PC-9 (cell line): ENCODE measurements at regions of chr11 and their contacts with region 1.

Region 1: DNA sequence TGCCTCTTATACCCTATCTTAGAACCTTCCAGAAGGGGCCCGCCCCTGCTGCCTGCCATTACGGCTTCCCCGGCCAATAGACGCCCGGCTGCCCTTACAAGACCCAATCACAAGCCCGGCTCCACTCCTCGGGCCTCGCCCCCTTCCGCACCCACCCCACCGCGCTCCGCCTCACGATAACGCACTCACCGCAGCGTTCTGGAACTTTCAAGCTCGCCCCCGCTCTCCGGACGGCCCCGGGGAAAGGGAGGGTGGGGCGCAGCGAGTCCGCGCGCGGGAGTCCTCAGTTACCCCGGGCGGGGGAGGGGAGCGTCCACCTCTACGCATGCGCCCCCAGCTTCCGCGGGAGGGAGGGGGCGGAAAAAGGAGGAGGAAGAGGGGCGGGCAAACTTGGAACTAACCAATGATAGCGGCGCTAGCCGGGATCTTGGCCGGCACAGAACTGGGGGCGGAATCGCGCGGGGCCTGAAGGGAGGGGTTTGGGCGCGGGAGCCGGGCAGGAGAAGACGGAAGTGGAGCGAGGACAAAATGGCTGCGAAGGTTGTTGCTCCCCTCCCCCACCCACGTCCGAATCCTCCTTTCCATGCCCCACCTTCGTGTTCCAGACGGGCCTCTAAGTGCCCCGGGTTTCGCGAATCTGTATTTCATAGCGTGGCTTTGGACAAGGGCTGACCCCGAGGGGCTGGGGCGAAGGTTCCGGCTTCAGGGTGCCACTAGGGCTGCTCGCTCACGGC is 389 bp upstream of the HSPA8 start:
- DNase-seq: peak; percentile 97 to 99
- H3K4me3 ChIP-seq: peak overlapping the region; percentile 97
- H3K27ac ChIP-seq: peak overlapping the region; percentile 96
- H3K4me1 ChIP-seq: peaks cover 53% of the 10 kb centered on the region
- H3K27me3 ChIP-seq: no peaks in the 10 kb centered on the region
- CTCF ChIP-seq: no peak

Region 2: DNA sequence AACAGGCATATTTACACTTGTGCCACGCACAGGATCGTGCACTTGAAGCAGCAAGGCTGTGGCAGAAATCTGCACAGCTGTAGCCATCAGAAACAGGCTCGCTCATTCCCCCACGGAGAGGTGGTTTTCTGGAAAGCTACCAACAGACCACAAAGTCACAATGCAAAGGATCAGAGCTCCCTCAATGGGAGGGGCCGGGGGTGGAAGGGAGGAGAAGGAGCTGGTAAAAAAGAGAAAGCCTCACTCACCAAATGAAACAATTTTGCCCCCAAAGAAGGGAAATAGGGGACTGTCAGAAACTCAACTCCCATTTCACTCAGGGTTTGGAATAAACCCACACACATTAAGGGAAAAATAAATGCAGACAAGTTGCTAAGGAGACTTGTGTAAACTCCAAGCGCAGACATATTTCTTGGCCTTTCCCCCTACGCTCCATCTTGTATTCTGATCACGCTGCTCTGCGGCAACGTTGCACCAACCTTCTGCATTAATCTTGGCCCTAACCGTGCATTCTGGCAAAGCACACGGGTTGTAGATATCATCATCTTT is 903.1 kb before region 1 on chr11:
- CTCF ChIA-PET with region 1: no interaction called
- POLR2A ChIA-PET with region 1: interaction called, 10 read pairs
- intact Hi-C with region 1: no loop called
- DNase-seq: no peak
- H3K4me3 ChIP-seq: no peak overlapping the region
- H3K27ac ChIP-seq: no peak overlapping the region
- H3K4me1 ChIP-seq: peaks cover 32% of the 10 kb centered on the region
- H3K27me3 ChIP-seq: no peaks in the 10 kb centered on the region
- CTCF ChIP-seq: no peak

Region 3: DNA sequence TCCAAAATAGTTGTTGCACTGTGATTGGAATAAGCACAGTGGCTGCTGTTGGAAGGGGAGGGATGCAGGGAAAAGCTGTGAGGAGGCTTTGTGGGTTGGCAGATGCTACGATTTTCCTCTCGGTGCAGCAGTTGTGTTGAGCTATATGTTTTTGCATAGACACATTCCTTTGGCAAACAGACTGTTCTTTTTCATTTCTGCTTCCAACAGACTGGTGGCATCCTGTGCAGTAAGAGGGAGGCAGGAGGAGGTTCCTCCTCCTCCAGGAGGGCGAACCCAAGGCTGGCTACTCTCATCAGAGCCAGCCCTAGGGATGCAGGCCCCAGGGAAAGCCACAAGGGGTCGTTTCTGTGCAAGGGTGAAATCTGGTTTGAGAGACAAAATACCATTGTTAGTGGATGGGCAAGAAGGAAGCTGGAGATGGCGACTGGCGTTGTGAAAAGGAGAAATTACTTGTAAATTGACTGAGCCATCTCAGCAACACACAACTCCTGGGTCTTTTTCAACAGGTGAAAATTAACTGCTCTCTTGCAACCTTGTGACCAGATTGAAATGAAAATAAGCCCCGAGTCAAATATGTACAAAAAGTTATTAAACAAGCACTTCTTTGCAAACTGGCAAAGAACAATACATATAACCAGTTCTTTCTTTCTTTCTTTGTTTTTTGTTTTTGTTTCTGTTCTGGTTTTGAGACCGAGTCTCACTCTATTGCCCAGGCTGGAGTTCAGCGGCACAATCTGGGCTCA is 433.3 kb before region 1 on chr11:
- CTCF ChIA-PET with region 1: no interaction called
- POLR2A ChIA-PET with region 1: no interaction called
- intact Hi-C with region 1: loop called (anchors 5 kb)
- DNase-seq: peak; percentile 53 to 65
- H3K4me3 ChIP-seq: no peak overlapping the region
- H3K27ac ChIP-seq: no peak overlapping the region
- H3K4me1 ChIP-seq: peaks cover 36% of the 10 kb centered on the region
- H3K27me3 ChIP-seq: no peaks in the 10 kb centered on the region
- CTCF ChIP-seq: peak; percentile 86

Region 4: DNA sequence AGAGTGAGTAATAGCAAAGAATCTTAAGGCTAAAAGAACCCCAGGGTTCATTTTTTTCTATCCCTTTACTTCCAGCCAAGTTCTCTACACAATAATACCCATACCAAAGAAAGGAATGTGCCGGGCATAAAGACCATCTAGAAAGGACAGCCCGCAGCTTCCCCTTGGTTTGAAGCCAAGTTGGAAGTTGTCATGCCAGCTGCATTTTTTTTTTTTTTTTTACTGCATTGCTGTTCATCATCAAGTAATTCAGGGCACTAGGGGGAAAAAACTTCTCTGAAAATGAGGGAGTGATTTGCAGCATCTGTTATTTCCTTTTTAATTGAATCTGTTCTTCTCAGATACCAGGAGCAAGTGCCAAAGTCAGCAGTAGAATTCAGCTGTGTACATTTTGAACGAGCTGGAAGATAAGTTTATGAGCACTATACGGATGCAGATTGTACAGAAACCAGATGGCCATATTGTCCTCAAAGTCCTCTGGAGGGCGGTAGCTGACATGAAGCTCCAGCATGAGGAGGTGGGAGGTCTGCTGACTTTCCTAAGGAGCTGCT is 350.4 kb before region 1 on chr11:
- CTCF ChIA-PET with region 1: no interaction called
- POLR2A ChIA-PET with region 1: no interaction called
- intact Hi-C with region 1: loop called (anchors 5 kb)
- DNase-seq: peak; percentile 49 to 72
- H3K4me3 ChIP-seq: no peak overlapping the region
- H3K27ac ChIP-seq: no peak overlapping the region; the same call in 1 of the 2 replicates
- H3K4me1 ChIP-seq: peaks cover 32% of the 10 kb centered on the region
- H3K27me3 ChIP-seq: no peaks in the 10 kb centered on the region
- CTCF ChIP-seq: no peak

Region 5: DNA sequence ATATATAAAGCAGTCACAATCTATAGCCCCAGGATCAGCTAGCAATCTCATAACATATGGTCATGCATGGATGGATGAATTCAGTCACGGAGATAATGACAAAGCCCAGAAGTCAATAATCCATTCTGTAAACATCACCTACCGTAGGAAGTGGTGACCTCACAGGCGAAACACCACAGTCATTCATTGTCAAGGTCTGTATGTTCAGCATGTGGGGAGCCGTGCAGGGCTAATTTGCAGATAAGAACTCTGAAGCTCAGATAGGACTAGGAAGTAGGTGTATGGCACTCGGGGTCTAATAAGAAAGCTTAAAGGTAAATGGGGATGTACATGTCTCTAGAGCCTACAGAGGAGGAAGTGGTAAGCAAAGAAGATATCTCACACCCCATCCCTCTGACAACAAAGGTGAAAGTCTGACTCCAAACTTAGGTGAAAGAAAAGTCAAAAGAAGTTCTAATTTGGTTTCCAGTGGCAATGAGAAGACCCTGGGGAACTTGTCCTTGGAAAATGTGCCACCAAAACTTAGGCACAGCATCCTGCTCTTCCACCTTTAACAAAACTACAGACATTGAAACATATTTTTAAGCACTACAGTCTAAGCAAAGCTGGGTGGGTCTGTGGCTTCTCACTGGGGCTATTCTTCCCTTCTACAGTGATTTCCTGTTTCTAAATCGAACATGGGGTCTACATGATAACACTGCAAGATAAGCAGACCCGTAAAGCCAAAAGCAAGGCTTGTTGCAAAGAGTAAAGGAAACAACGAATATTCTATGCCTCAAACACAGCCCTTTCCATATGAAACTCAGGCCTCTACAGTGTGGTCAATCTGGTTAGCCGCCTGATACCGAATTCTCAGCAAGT is 218.8 kb before region 1 on chr11:
- CTCF ChIA-PET with region 1: no interaction called
- POLR2A ChIA-PET with region 1: no interaction called
- intact Hi-C with region 1: no loop called
- DNase-seq: no peak
- H3K4me3 ChIP-seq: no peak overlapping the region
- H3K27ac ChIP-seq: no peak overlapping the region
- H3K4me1 ChIP-seq: no peaks in the 10 kb centered on the region
- H3K27me3 ChIP-seq: no peaks in the 10 kb centered on the region
- CTCF ChIP-seq: no peak

Region 6: GRCh38 chr11:123083623-123084029 is 21.3 kb after region 1 on chr11:
- CTCF ChIA-PET with region 1: interaction called, 3 read pairs
- POLR2A ChIA-PET with region 1: interaction called, 4 read pairs
- intact Hi-C with region 1: loop called (anchors 1 kb)
- DNase-seq: peak; percentile 90 to 95
- H3K4me3 ChIP-seq: no peak overlapping the region
- H3K27ac ChIP-seq: peak overlapping the region; percentile 38
- H3K4me1 ChIP-seq: peaks cover 22% of the 10 kb centered on the region
- H3K27me3 ChIP-seq: no peaks in the 10 kb centered on the region
- CTCF ChIP-seq: no peak

Region 7: DNA sequence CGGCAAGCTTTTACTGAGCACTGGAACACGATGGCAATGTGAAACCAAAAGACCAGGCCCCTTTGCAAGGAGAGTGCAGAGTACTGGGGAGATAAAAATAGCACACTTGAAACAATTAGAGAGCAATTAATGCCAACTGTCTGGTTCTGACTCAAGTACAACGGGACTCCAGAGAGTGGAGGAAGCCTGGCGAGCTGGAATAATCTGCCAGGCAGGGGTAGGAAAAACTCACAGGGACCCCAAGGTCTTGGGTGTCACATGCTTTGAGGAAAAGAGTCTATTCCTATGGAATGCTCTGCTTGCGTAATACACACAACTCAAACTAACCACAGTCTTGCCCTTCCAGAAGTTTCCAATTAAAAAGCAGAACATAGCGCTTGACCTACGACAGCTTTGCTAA is 245.8 kb after region 1 on chr11:
- CTCF ChIA-PET with region 1: no interaction called
- POLR2A ChIA-PET with region 1: no interaction called
- intact Hi-C with region 1: no loop called
- DNase-seq: no peak
- H3K4me3 ChIP-seq: no peak overlapping the region
- H3K27ac ChIP-seq: no peak overlapping the region
- H3K4me1 ChIP-seq: no peaks in the 10 kb centered on the region
- H3K27me3 ChIP-seq: no peaks in the 10 kb centered on the region
- CTCF ChIP-seq: no peak

Region 8: GRCh38 chr11:123511037-123511870 is 448.9 kb after region 1 on chr11:
- CTCF ChIA-PET with region 1: no interaction called
- POLR2A ChIA-PET with region 1: interaction called, 19 read pairs
- intact Hi-C with region 1: no loop called
- DNase-seq: peak; percentile 68 to 84
- H3K4me3 ChIP-seq: no peak overlapping the region
- H3K27ac ChIP-seq: no peak overlapping the region
- H3K4me1 ChIP-seq: no peaks in the 10 kb centered on the region
- H3K27me3 ChIP-seq: no peaks in the 10 kb centered on the region
- CTCF ChIP-seq: peak; percentile 94